Endothelial cell of umbilical vein (primary cell): ENCODE measurements at regions of chr6 and their contacts with region 1.

Region 1: GRCh38 chr6:85482905-85483700 is 33.2 kb downstream of the NT5E start:
- DNase-seq: peak; percentile 80
- H3K4me3 ChIP-seq: no peak overlapping the region
- H3K27ac ChIP-seq: peak overlapping the region; percentile 12
- H3K4me1 ChIP-seq: peaks cover 7% of the 10 kb centered on the region
- H3K27me3 ChIP-seq: no peaks in the 10 kb centered on the region
- CTCF ChIP-seq: peak; percentile 96 to 98
- POLR2A ChIP-seq: no peak

Region 2: DNA sequence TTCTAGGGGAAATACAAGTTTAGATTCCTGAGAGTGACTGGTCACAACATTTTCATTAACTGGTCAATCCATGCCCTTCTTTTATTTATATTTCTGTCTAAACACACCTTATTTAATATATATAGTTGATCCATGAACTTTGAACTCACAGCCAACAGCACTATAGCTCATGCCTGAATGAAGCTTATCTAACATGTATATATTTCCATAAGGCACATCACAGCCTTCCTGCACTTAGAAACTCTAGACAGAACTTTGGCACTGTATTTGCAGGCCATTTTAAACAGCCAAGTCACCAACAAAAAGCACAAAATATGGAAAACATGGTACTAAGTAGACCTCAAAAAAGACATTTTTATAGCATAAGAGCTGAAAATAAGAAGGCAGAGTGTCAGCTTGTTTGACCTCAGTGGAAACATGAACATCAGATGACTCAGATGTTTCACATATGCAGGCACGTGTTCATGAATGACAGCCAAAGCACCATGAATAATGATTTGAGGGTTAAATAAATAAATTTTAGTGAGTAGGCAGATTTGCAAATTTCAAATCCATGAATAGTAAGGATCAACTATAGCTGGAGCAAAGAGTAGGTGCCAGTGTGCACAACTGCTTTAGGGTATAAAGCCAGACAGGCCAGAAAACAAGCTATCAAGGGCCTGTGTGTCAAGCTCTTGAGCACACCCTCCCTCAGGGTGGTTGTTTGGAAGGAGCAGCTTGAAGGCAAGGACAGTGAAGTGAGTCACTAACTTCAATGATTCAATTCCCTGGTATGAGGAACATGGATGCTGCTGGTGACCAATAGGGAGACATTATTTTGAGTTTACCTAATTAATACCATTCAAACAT is 122.1 kb before region 1 on chr6:
- CTCF ChIA-PET with region 1: interaction called, 210 read pairs
- POLR2A ChIA-PET with region 1: no interaction called
- dilution Hi-C with region 1: no loop called
- intact Hi-C with region 1: no loop called
- DNase-seq: peak; percentile 70
- H3K4me3 ChIP-seq: no peak overlapping the region
- H3K27ac ChIP-seq: peak overlapping the region; percentile 70
- H3K4me1 ChIP-seq: peaks cover 30% of the 10 kb centered on the region
- H3K27me3 ChIP-seq: no peaks in the 10 kb centered on the region
- CTCF ChIP-seq: no peak
- POLR2A ChIP-seq: no peak

Region 3: GRCh38 chr6:85394853-85395538 is 88.1 kb before region 1 on chr6:
- CTCF ChIA-PET with region 1: interaction called, 25 read pairs
- POLR2A ChIA-PET with region 1: no interaction called
- dilution Hi-C with region 1: no loop called
- intact Hi-C with region 1: no loop called
- DNase-seq: peak; percentile 78
- H3K4me3 ChIP-seq: no peak overlapping the region
- H3K27ac ChIP-seq: no peak overlapping the region
- H3K4me1 ChIP-seq: peaks cover 6% of the 10 kb centered on the region
- H3K27me3 ChIP-seq: no peaks in the 10 kb centered on the region
- CTCF ChIP-seq: no peak
- POLR2A ChIP-seq: no peak

Region 4: GRCh38 chr6:85431271-85431670 is 51.8 kb before region 1 on chr6:
- CTCF ChIA-PET with region 1: interaction called, 10 read pairs
- POLR2A ChIA-PET with region 1: no interaction called
- dilution Hi-C with region 1: no loop called
- intact Hi-C with region 1: no loop called
- DNase-seq: no peak
- H3K4me3 ChIP-seq: no peak overlapping the region
- H3K27ac ChIP-seq: no peak overlapping the region
- H3K4me1 ChIP-seq: no peaks in the 10 kb centered on the region
- H3K27me3 ChIP-seq: no peaks in the 10 kb centered on the region
- CTCF ChIP-seq: no peak
- POLR2A ChIP-seq: no peak

Region 5: DNA sequence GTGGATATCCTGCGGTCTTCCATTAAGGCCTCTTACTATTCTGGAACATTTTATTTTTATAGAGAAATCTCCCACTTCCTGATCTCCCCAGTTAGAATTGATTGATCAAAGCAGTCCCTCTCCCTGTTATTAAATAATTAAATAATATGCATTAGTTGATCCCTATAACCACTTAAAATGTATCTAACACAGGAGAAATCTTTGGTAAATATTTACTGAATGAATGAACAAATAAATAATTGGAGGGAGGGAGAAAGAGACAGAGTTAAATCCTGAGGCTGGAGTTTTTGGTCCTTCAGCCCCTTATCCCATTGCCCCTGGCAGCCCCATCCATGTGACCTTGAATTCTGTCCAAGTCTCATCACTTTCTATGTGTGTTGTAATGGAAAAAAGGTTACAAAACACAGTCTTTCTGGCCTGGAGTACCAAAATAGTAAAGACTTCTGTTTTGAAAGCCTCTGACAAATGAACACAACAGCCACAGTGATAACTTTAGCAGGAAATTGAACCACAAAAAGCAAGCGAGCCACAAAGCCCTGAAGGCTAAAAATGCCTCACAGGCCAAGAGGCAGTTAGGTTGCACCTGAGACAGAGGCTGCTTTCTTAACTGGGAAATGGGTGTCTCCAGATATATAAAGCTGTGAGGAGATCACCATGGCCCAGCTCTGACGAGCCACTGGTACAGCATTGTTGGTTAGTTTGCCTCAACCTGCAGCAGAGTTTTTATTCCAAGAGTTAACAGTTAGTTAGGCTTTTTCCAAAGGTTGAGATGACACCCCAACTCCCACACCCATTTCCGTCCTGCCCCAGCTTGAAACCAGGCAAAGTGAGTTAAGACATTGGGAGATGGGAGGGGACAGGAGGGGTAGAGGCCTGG is 21.9 kb before region 1 on chr6:
- CTCF ChIA-PET with region 1: interaction called, 541 read pairs
- POLR2A ChIA-PET with region 1: interaction called, 6 read pairs
- dilution Hi-C with region 1: no loop called
- intact Hi-C with region 1: loop called (anchors 1 kb)
- DNase-seq: peak; percentile 61
- H3K4me3 ChIP-seq: peak overlapping the region in 1 of 3 experiments; percentile 8
- H3K27ac ChIP-seq: peak overlapping the region; percentile 100
- H3K4me1 ChIP-seq: peaks cover 90% of the 10 kb centered on the region
- H3K27me3 ChIP-seq: no peaks in the 10 kb centered on the region
- CTCF ChIP-seq: no peak
- POLR2A ChIP-seq: no peak

Region 6: GRCh38 chr6:85537055-85537494 is 54.0 kb after region 1 on chr6:
- CTCF ChIA-PET with region 1: interaction called, 45 read pairs
- POLR2A ChIA-PET with region 1: no interaction called
- dilution Hi-C with region 1: no loop called
- intact Hi-C with region 1: loop called (anchors 2 kb)
- DNase-seq: peak; percentile 32
- H3K4me3 ChIP-seq: no peak overlapping the region
- H3K27ac ChIP-seq: no peak overlapping the region
- H3K4me1 ChIP-seq: no peaks in the 10 kb centered on the region
- H3K27me3 ChIP-seq: no peaks in the 10 kb centered on the region
- CTCF ChIP-seq: peak in 1 of 2 donors; percentile 34
- POLR2A ChIP-seq: no peak

Region 7: GRCh38 chr6:85620308-85620707 is 137.2 kb after region 1 on chr6:
- CTCF ChIA-PET with region 1: no interaction called
- POLR2A ChIA-PET with region 1: no interaction called
- dilution Hi-C with region 1: no loop called
- intact Hi-C with region 1: no loop called
- DNase-seq: no peak
- H3K4me3 ChIP-seq: no peak overlapping the region
- H3K27ac ChIP-seq: no peak overlapping the region
- H3K4me1 ChIP-seq: no peaks in the 10 kb centered on the region
- H3K27me3 ChIP-seq: no peaks in the 10 kb centered on the region
- CTCF ChIP-seq: no peak
- POLR2A ChIP-seq: no peak